GM10248 (cell line): ENCODE measurements at regions of chr5 and their contacts with region 1.

Region 1: DNA sequence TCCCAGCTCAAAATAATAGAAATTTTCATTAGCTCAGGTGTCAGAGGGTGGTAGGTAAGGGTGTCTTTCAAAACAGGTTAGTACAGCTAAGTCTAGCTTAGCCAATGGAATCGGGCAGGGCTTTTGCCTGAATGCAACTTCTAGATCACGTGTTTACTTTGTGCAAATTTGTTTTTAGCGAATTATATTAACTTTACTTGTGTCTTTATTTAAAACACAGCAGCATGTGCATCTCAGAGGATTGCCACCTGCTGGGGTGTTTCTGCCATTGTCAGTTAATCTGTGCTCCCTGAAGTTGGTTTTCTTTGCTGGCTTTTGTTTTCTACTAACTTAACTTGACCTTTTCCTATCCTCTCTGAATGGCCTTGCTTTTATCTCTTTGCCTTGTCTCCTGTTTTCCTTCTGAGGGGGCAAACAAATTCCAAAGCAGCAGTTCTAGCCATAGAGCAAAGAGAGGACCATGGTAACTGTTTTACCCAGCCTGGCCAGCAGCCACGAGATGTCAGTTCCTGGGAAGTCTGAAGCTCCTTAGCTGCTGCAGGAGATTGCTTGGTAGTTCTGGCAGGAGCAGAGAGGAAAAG is 67.6 kb downstream of the ARHGEF28 start:
- DNase-seq: no peak
- CTCF ChIP-seq: peak; percentile 22

Region 2: GRCh38 chr5:73654171-73654811 is 39.3 kb before region 1 on chr5:
- CTCF ChIA-PET with region 1: interaction called, 14 read pairs
- POLR2A ChIA-PET with region 1: no interaction called
- DNase-seq: peak; percentile 34
- CTCF ChIP-seq: no peak

Region 3: DNA sequence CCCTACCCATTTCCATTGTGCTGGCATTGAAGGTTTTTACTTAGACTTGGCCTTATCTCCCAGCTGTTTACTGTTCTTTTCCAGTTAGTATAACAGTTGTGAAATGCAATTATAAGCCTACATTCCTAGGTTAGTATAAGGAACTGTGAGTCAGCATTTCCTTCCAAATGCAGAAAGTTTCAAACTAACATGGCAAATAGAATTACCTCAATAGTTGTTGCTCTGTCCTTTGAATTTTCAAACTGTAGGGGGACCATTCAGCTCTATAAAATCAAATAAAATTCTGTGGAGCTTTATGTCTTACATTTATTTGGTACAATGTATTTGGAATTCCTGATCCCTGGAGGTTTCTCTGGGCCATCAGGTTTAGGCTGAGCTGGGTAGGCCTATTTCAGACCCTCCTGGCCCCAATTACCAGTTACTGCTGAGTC is 20.4 kb before region 1 on chr5:
- CTCF ChIA-PET with region 1: interaction called, 13 read pairs
- POLR2A ChIA-PET with region 1: no interaction called
- DNase-seq: no peak
- CTCF ChIP-seq: no peak

Region 4: DNA sequence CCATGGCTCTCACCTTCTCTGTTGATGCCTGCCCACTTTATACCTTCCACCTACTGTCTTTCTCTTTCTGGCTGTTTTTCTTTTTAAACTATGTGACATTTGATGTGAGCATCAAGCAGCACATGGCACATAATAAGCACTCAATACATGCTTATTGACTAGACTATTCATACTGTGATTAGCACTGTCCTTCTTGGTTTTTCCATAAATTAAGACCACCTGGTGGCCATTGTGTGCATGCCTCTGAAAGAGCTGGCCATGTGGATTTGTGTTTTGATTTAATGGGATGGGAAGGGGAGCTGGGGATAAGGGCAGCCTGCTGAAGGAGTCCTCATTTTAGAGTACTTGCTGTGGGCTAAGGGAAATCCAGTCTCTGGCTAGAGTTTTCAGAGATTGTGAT is 11.8 kb after region 1 on chr5:
- CTCF ChIA-PET with region 1: interaction called, 11 read pairs
- POLR2A ChIA-PET with region 1: no interaction called
- DNase-seq: no peak
- CTCF ChIP-seq: no peak